Vagina (tissue), 2 donors: ENCODE measurements at regions of chr12 and their contacts with region 1.

Region 1: GRCh38 chr12:54678131-54678530 is 30.0 kb upstream of the DCD start:
- DNase-seq: no peak
- H3K4me3 ChIP-seq: no peak overlapping the region
- H3K27ac ChIP-seq: no peak overlapping the region
- H3K4me1 ChIP-seq: no peaks in the 10 kb centered on the region
- H3K27me3 ChIP-seq: no peaks in the 10 kb centered on the region
- CTCF ChIP-seq: no peak
- POLR2A ChIP-seq: no peak

Region 2: DNA sequence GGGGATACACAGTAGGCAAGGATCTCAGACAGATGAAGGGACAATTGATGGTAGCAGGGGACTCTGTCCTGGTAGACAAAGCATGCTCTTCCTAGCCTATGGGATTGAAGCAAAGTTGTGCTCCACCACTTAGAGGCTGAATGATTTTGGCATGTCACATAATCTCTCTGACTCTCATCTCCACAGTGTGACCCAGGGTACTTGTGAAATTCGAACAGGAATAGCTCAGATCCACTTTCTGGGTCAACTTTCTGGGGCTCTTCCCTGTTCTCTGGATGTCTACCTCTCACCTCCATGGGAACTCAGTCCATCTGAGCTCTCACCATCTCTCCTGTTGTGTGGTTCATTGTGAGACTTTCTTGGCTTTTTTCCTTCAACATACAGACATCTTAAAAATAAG is 28.3 kb before region 1 on chr12:
- intact Hi-C with region 1: loop called (anchors 1 kb)
- DNase-seq: no peak
- H3K4me3 ChIP-seq: no peak overlapping the region
- H3K27ac ChIP-seq: no peak overlapping the region
- H3K4me1 ChIP-seq: no peaks in the 10 kb centered on the region
- H3K27me3 ChIP-seq: no peaks in the 10 kb centered on the region
- CTCF ChIP-seq: no peak
- POLR2A ChIP-seq: no peak

Region 3: DNA sequence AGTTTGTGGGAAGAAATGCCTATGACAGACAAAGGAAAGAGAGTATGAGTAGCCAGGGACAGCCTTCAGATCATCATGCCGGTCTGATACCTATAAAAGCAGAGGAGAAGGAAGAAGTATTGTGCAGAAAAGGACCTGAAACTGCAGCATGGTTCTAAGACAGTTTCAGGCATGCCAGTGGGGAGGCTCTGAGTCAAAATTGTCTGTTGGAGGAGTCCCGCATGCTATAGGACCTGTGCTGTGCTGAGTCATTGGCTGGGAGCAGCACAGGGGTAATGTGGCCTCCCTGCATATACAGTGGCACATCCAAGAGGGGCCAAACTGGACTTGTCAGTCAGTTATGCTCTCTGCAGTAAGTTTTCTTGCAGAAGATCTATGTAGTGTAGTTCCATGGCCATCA is 382.3 kb after region 1 on chr12:
- intact Hi-C with region 1: no loop called
- DNase-seq: no peak
- H3K4me3 ChIP-seq: no peak overlapping the region
- H3K27ac ChIP-seq: no peak overlapping the region
- H3K4me1 ChIP-seq: no peaks in the 10 kb centered on the region
- H3K27me3 ChIP-seq: no peaks in the 10 kb centered on the region
- CTCF ChIP-seq: no peak
- POLR2A ChIP-seq: no peak

Region 4: GRCh38 chr12:55407866-55408265 is 729.7 kb after region 1 on chr12:
- intact Hi-C with region 1: no loop called
- DNase-seq: no peak
- H3K4me3 ChIP-seq: no peak overlapping the region
- H3K27ac ChIP-seq: no peak overlapping the region
- H3K4me1 ChIP-seq: no peaks in the 10 kb centered on the region
- H3K27me3 ChIP-seq: no peaks in the 10 kb centered on the region
- CTCF ChIP-seq: no peak
- POLR2A ChIP-seq: no peak